Right ventricle myocardium superior (tissue), 1 donor: ENCODE measurements at regions of chr5 and their contacts with region 1.

Region 1: DNA sequence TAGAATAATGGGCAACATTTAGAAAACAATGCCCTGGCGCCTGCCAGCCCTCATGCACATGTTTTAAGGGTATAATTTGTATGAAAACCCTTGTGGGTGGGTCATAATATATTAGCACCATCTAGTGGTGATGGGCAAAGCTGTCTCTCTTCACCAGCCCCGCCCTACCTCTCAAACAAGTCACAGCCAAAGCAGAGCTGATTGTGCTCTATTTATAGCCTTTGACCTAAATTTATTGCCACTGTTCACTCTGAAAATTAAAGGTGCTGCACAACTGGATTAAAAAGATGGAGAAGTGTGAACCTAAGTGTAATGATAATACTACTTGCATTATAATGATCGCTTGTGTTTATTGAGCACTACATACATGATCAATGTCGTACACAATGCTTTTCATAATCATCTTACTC is 131.9 kb upstream of the ANKH start:
- DNase-seq: peak; percentile 63
- ATAC-seq: peak; percentile 88

Region 2: GRCh38 chr5:14727428-14727865 is 276.1 kb before region 1 on chr5:
- intact Hi-C with region 1: loop called (anchors 5 kb)
- DNase-seq: peak; percentile 83
- ATAC-seq: peak; percentile 83

Region 3: DNA sequence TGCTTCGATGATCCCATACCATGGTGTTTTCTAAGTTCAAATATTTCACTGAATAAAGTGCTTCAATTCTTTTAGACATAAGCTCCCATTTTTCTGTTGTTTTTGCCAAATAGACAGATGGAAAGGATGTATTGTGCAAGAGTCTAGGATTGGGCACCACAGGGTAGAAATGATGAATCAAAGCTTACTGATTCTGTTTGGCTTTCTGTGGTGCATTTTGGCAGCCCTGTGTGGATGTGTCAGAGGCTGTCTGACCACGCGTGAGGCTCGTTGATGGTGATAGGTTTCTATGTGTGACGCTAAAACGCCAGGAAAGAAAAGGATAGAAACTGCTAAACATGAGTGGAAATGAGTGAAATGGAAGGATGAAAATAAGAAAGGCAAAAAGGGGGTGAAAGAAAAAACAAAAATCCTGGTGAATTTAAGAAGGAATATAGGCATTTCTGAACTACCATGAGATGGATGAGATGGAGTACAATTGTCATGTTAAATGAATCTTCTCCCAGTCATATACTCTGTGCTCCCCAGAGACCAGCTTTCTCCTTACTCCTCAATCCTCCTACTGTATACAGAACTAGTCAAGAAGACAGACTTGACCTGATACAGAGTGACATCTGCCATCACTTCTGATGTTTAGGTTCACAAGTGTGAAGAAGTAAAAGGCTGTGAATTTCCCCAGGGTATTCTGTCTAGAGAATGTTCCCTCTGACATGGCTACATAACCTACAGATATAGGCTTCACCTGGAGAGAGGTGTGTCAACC is 186.3 kb before region 1 on chr5:
- intact Hi-C with region 1: no loop called
- DNase-seq: peak; percentile 46
- ATAC-seq: peak; percentile 50

Region 4: GRCh38 chr5:14871210-14872069 is 132.1 kb before region 1 on chr5 and contains the start of gene ANKH:
- intact Hi-C with region 1: loop called (anchors 5 kb)
- DNase-seq: peak; percentile 89
- ATAC-seq: peak; percentile 88
- total RNA-seq, gene ANKH: 144 TPM

Region 5: DNA sequence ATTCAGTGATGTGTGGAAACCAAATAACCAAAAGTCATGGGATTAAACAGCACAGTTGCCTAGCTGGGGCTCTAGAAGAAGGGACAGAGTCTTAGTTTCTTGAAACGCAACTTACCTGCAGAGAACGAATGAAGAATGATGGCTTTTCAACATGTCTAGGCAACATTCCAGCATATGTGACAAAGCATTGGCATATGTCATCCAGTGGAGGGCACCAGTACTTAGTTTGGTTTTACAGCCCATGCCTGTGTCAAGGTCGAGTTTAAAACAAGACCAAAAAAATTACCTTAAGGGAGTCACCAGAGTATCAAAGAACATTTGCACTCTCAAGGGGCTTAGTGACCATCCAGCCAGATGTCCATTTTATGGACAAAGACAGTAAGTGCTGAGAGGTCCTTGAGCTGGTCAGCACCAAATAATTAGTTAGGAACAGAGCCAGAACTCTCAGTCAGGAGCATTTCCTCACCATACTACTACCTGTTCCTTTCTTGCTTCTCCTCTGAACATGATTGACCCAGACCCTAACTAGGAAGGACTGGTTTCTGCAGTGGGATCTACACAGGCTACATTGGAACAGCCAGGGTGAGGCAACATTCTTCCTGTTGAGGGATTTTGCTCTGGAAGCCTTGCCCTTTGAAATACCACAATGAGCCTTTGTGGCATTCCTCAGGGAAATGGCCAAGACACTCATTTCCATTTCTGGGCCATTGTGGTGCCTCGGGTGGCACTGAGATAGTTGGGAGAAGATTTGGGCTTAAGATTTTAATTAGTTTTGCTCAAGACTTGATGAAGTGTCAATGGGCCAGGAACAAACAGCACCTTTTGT is 56.5 kb before region 1 on chr5:
- intact Hi-C with region 1: loop called (anchors 5 kb)
- DNase-seq: no peak
- ATAC-seq: peak; percentile 73